Activated T-helper 2 cell treated with anti-CD3 and anti-CD28 coated beads, Interferon-gamma antibody, Interleukin-2, Interleukin-4, amounts not matched to agents 10 μg/mL and 5 μg/mL and 100 μg/mL, durations not matched to agents 14 hours and 24 hours and 36 hours (primary cell): ENCODE measurements at regions of chr6 and their contacts with region 1.

Region 1: DNA sequence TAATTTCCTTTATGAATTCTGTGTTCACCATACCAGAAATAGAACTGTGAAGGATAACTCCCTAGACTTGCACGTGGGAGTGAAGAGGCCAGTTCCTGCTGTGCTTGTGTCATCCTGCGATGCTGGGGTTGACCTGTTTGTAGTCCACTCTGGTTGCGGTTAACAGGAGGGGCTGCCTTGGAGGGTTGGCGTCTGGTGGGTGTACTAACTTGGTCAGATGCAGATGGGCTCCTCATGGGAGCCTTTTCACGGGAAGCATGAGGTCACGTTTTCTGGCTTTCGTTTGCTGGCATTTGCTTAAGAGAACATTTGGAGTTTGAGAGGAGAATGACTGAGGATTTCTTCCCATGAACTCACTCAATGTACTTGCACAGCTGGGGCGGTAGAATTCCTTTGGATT is 41.2 kb downstream of the IGF2R start:
- DNase-seq: no peak
- H3K4me3 Mint-ChIP-seq: no peak overlapping the region
- H3K27ac Mint-ChIP-seq: no peak overlapping the region
- H3K4me1 Mint-ChIP-seq: peaks cover 34% of the 10 kb centered on the region
- H3K27me3 Mint-ChIP-seq: no peaks in the 10 kb centered on the region

Region 2: GRCh38 chr6:158488065-158488464 is 1522.0 kb before region 1 on chr6:
- intact Hi-C with region 1: no loop called
- DNase-seq: no peak
- H3K4me3 Mint-ChIP-seq: no peak overlapping the region
- H3K27ac Mint-ChIP-seq: no peak overlapping the region
- H3K4me1 Mint-ChIP-seq: peaks cover 6% of the 10 kb centered on the region
- H3K27me3 Mint-ChIP-seq: no peaks in the 10 kb centered on the region

Region 3: GRCh38 chr6:159968440-159969203 is 41.4 kb before region 1 on chr6 and contains the start of gene IGF2R:
- intact Hi-C with region 1: loop called (anchors 1 kb)
- DNase-seq: peak; percentile 88
- H3K4me3 Mint-ChIP-seq: peak within 1 kb of the TSS; percentile 95
- H3K27ac Mint-ChIP-seq: peak within 1 kb of the TSS; percentile 89
- H3K4me1 Mint-ChIP-seq: peaks cover 33% of the 10 kb centered on the region
- H3K27me3 Mint-ChIP-seq: peaks cover 18% of the 10 kb centered on the region
- total RNA-seq, gene IGF2R: 75.0 and 82.4 TPM in 2 replicates

Region 4: GRCh38 chr6:159999240-159999671 is 10.8 kb before region 1 on chr6:
- intact Hi-C with region 1: loop called (anchors 2 kb)
- DNase-seq: no peak
- H3K4me3 Mint-ChIP-seq: no peak overlapping the region
- H3K27ac Mint-ChIP-seq: peak overlapping the region; percentile 69
- H3K4me1 Mint-ChIP-seq: peaks cover 47% of the 10 kb centered on the region
- H3K27me3 Mint-ChIP-seq: no peaks in the 10 kb centered on the region

Region 5: GRCh38 chr6:160077526-160077925 is 67.5 kb after region 1 on chr6:
- intact Hi-C with region 1: no loop called
- DNase-seq: no peak
- H3K4me3 Mint-ChIP-seq: no peak overlapping the region
- H3K27ac Mint-ChIP-seq: no peak overlapping the region
- H3K4me1 Mint-ChIP-seq: no peaks in the 10 kb centered on the region
- H3K27me3 Mint-ChIP-seq: no peaks in the 10 kb centered on the region